Endothelial cell of umbilical vein (primary cell): ENCODE measurements at regions of chr10 and their contacts with region 1.

Region 1: DNA sequence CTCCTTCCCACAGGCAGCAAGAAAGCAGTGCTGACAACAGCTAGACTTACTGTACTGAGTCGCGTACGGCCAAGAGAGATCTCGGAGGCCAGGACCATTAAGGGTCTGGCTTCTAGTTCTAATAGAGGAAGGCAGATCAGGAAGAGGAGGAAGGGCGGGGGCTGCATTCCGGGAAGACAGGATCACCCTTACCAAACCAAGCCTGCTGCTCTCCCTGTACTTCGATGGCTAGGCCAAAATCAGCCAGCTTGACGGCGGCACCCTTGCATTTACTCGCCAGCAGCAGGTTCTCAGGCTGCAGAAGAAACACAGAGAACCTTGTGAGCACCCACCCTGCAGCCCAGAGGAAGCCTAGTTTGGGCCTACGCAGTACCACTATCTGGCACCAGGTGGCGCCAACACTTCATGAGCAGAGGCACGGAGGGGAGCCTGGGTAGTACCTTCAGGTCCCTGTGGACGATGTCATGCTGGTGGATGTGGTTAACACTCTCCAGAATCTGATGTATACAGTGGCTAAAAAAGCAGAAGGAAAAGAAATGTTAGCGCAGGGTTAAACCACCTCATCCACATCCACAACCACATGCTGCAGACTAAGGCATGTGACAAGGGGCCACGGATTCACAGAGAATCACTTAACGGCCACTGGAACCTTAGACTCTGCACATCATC is 25.4 kb downstream of the CAMK2G start:
- DNase-seq: peak; percentile 76
- H3K4me3 ChIP-seq: no peak overlapping the region
- H3K27ac ChIP-seq: no peak overlapping the region
- H3K4me1 ChIP-seq: no peaks in the 10 kb centered on the region
- H3K27me3 ChIP-seq: no peaks in the 10 kb centered on the region
- CTCF ChIP-seq: peak; percentile 99
- POLR2A ChIP-seq: no peak

Region 2: GRCh38 chr10:74021248-74022055 is 172.5 kb after region 1 on chr10:
- CTCF ChIA-PET with region 1: no interaction called
- POLR2A ChIA-PET with region 1: no interaction called
- dilution Hi-C with region 1: no loop called
- intact Hi-C with region 1: no loop called
- DNase-seq: peak; percentile 55
- H3K4me3 ChIP-seq: no peak overlapping the region
- H3K27ac ChIP-seq: peak overlapping the region; percentile 20
- H3K4me1 ChIP-seq: peaks cover 25% of the 10 kb centered on the region
- H3K27me3 ChIP-seq: no peaks in the 10 kb centered on the region
- CTCF ChIP-seq: no peak
- POLR2A ChIP-seq: no peak

Region 3: GRCh38 chr10:74088722-74089121 is 239.8 kb after region 1 on chr10:
- CTCF ChIA-PET with region 1: no interaction called
- POLR2A ChIA-PET with region 1: no interaction called
- dilution Hi-C with region 1: no loop called
- intact Hi-C with region 1: loop called (anchors 2 kb)
- DNase-seq: no peak
- H3K4me3 ChIP-seq: no peak overlapping the region
- H3K27ac ChIP-seq: no peak overlapping the region
- H3K4me1 ChIP-seq: no peaks in the 10 kb centered on the region
- H3K27me3 ChIP-seq: no peaks in the 10 kb centered on the region
- CTCF ChIP-seq: no peak
- POLR2A ChIP-seq: no peak